ENCODE measurements at regions of chr9 and their contacts with region 1.

Region 1: GRCh38 chr9:10260501-10260900 is 352.3 kb downstream of the PTPRD start:
- DNase-seq: no peak
- H3K4me3 ChIP-seq: no peak overlapping the region
- H3K27ac ChIP-seq: no peak overlapping the region
- H3K4me1 ChIP-seq: peaks cover 5% of the 10 kb centered on the region
- H3K27me3 ChIP-seq: no peaks in the 10 kb centered on the region
- CTCF ChIP-seq: no peak

Region 2: GRCh38 chr9:10032166-10032565 is 228.3 kb before region 1 on chr9:
- CTCF ChIA-PET with region 1: no interaction called
- dilution Hi-C with region 1: no loop called
- in situ Hi-C with region 1: no loop called
- intact Hi-C with region 1: no loop called
- DNase-seq: no peak
- H3K4me3 ChIP-seq: no peak overlapping the region
- H3K27ac ChIP-seq: no peak overlapping the region
- H3K4me1 ChIP-seq: no peaks in the 10 kb centered on the region
- H3K27me3 ChIP-seq: no peaks in the 10 kb centered on the region
- CTCF ChIP-seq: no peak

Region 3: GRCh38 chr9:10059044-10059443 is 201.5 kb before region 1 on chr9:
- CTCF ChIA-PET with region 1: no interaction called
- dilution Hi-C with region 1: no loop called
- in situ Hi-C with region 1: loop called (anchors 5 to 25 kb)
- intact Hi-C with region 1: no loop called
- DNase-seq: peak; percentile 88
- H3K4me3 ChIP-seq: no peak overlapping the region
- H3K27ac ChIP-seq: peak overlapping the region; percentile 47
- H3K4me1 ChIP-seq: peaks cover 22% of the 10 kb centered on the region
- H3K27me3 ChIP-seq: no peaks in the 10 kb centered on the region
- CTCF ChIP-seq: no peak

Region 4: DNA sequence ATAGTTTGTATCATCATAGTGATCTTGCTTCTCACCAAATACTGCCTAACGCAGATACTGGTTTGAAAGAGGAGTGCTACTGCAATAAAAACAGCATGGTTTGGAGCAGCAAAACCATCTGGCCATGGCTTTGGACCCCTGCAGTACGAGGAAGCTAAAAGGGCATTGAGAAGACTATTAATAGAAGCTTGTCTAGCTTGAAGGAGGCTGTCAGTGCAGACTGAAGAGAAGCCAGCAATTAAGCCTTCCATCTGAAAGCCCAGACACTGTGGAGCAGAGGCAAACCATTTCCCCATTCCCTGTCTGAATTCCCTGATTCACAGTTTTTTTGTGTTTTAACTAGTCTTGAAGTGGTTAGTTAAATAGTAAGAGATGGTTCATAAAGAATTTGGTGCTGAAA is 70.7 kb after region 1 on chr9:
- CTCF ChIA-PET with region 1: no interaction called
- dilution Hi-C with region 1: no loop called
- in situ Hi-C with region 1: no loop called
- intact Hi-C with region 1: no loop called
- DNase-seq: no peak
- H3K4me3 ChIP-seq: no peak overlapping the region
- H3K27ac ChIP-seq: no peak overlapping the region
- H3K4me1 ChIP-seq: no peaks in the 10 kb centered on the region
- H3K27me3 ChIP-seq: no peaks in the 10 kb centered on the region
- CTCF ChIP-seq: no peak

Measured in mammary epithelial cell (primary cell).